Natural killer cell (primary cell): ENCODE measurements at regions of chr6 and their contacts with region 1.

Region 1: GRCh38 chr6:16698997-16699868 is 62.0 kb downstream of the ATXN1 start:
- DNase-seq: peak in 1 of 2 donors; percentile 65
- ATAC-seq: peak; percentile 68 to 80 (median 72)
- H3K4me3 ChIP-seq: no peak overlapping the region
- H3K4me3 Mint-ChIP-seq: peak overlapping the region; percentile 87
- H3K27ac ChIP-seq: peak overlapping the region; percentile 69
- H3K27ac Mint-ChIP-seq: peak overlapping the region; percentile 85 to 92
- H3K4me1 ChIP-seq: peaks cover 27% of the 10 kb centered on the region
- H3K4me1 Mint-ChIP-seq: peaks cover 61 to 67% of the 10 kb centered on the region in 2 donors
- H3K27me3 ChIP-seq: no peaks in the 10 kb centered on the region
- H3K27me3 Mint-ChIP-seq: no peaks in the 10 kb centered on the region
- CTCF ChIP-seq: no peak

Region 2: DNA sequence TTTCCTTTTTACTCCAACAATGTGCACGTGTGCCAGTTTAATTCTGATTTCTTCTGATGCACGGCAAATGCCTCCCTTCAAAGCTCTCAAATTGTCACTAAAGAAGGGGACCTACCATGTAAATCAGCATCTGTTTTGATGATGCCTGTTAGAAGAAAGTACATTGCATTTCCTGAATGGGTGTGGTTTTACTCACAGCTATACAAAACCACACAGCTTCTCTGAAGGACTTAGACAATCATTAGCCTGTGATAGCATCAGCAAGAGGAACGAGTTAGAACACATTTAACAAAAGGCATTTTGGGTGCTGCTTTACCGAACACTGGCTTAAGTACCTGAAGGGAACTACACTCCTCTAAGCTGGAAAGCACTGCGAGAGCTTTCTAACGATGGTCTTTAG is 47.4 kb before region 1 on chr6:
- intact Hi-C with region 1: loop called (anchors 5 kb)
- DNase-seq: peak in 1 of 2 donors; percentile 74
- ATAC-seq: peak; percentile 75 to 80 (median 80)
- H3K4me3 ChIP-seq: no peak overlapping the region
- H3K4me3 Mint-ChIP-seq: peak overlapping the region; percentile 18
- H3K27ac ChIP-seq: no peak overlapping the region
- H3K27ac Mint-ChIP-seq: peak overlapping the region; percentile 24 to 27
- H3K4me1 ChIP-seq: peaks cover 29% of the 10 kb centered on the region
- H3K4me1 Mint-ChIP-seq: peaks cover 44 to 46% of the 10 kb centered on the region in 2 donors
- H3K27me3 ChIP-seq: no peaks in the 10 kb centered on the region
- H3K27me3 Mint-ChIP-seq: no peaks in the 10 kb centered on the region
- CTCF ChIP-seq: no peak

Region 3: GRCh38 chr6:16684896-16685554 is 14.2 kb before region 1 on chr6:
- intact Hi-C with region 1: loop called (anchors 2 kb)
- DNase-seq: peak in 1 of 2 donors; percentile 79
- ATAC-seq: peak; percentile 45 to 68 (median 48)
- H3K4me3 ChIP-seq: no peak overlapping the region
- H3K4me3 Mint-ChIP-seq: no peak overlapping the region
- H3K27ac ChIP-seq: no peak overlapping the region
- H3K27ac Mint-ChIP-seq: peak overlapping the region in 1 of 2 donors; percentile 75
- H3K4me1 ChIP-seq: peaks cover 8% of the 10 kb centered on the region
- H3K4me1 Mint-ChIP-seq: peaks cover 38 to 51% of the 10 kb centered on the region in 2 donors
- H3K27me3 ChIP-seq: no peaks in the 10 kb centered on the region
- H3K27me3 Mint-ChIP-seq: no peaks in the 10 kb centered on the region
- CTCF ChIP-seq: no peak

Region 4: DNA sequence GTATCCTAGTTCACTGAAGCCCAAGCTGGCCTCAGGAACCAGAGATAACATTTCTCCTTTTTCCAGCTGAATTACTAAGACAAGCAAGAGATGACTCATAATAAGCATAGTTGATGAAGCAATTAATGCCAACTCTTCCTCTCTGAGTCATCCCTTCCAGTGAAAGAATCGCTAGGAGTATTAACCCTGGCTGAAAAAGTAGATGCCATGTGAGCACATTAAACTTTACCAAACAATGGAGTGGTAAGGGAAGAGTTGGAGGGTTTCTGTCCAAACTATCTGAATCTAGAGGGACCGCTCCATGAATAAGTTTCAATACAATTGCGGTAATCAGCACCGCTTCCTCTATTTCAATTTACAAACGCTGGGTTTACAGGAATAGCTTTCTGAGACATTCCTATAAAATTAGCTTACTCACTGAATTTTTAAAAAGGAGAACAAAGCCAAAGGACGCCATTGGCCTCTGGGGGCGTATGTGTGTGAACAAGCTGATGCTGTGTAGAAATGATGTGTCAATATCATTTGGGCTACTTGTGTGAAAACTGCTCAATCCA is 13.8 kb after region 1 on chr6:
- intact Hi-C with region 1: loop called (anchors 2 kb)
- DNase-seq: peak in 1 of 2 donors; percentile 56
- ATAC-seq: peak; percentile 55 to 69 (median 58)
- H3K4me3 ChIP-seq: no peak overlapping the region
- H3K4me3 Mint-ChIP-seq: peak overlapping the region; percentile 48
- H3K27ac ChIP-seq: peak overlapping the region; percentile 73
- H3K27ac Mint-ChIP-seq: peak overlapping the region; percentile 54 to 85
- H3K4me1 ChIP-seq: peaks cover 20% of the 10 kb centered on the region
- H3K4me1 Mint-ChIP-seq: peaks cover 29 to 52% of the 10 kb centered on the region in 2 donors
- H3K27me3 ChIP-seq: no peaks in the 10 kb centered on the region
- H3K27me3 Mint-ChIP-seq: no peaks in the 10 kb centered on the region
- CTCF ChIP-seq: no peak